Heart right ventricle (tissue), 16 donors: ENCODE measurements at regions of chr1 and their contacts with region 1.

Region 1: DNA sequence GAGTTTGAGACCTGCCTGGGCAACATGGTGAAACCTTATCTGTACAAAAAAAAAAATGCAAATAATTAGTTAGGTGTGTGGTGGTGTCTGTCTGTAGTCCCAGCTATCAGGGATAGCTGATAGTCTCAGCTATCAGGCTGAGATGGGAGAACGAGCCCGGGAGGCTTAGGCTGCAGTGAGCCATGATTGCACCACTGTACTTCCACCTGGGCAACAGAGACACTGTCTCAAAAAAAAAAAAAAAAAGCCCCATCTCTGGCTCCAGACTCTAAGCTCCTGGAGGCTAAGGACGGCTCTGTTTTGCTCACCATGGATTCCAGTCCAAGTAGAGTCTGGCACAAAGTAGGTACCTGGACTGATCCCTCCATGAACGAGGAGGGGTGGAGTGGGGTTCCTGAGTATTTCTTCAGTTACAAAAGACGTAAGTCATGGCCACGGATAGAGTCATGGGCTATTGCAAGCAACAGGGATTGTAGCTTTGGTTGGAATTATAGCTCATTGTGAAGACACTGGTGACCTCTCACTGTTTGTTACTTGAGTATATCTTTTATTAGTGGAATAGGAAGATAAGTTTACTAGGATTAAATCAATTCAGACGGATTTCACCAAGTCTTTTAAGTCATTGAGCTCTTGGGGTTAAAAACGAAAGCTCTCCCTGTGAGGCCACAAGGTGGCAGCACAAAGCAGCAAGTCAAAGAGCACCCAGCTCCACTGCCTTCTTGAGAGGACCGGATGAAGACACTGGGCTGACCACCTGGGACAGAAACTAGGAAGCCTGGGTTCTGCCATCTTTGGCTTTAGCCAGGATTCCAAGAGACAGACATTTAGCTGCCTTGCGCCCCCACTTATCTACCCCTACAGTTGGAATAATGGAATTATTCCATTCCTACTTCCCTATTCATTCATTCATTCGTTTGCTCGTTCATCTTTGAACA is 35.6 kb upstream of the TMEM61 start:
- DNase-seq: peak; percentile 52 to 69
- ATAC-seq: peak in 7 of 8 donors; percentile 71 to 85 (median 77)
- H3K4me3 ChIP-seq: peak overlapping the region in 1 of 10 donors; percentile 24
- H3K27ac ChIP-seq: no peak overlapping the region
- H3K4me1 ChIP-seq: peaks cover 0 to 10% (median 0%) of the 10 kb centered on the region in 9 donors
- H3K27me3 ChIP-seq: no peaks in the 10 kb centered on the region
- CTCF ChIP-seq: peak; percentile 61 to 90 (median 85)

Region 2: DNA sequence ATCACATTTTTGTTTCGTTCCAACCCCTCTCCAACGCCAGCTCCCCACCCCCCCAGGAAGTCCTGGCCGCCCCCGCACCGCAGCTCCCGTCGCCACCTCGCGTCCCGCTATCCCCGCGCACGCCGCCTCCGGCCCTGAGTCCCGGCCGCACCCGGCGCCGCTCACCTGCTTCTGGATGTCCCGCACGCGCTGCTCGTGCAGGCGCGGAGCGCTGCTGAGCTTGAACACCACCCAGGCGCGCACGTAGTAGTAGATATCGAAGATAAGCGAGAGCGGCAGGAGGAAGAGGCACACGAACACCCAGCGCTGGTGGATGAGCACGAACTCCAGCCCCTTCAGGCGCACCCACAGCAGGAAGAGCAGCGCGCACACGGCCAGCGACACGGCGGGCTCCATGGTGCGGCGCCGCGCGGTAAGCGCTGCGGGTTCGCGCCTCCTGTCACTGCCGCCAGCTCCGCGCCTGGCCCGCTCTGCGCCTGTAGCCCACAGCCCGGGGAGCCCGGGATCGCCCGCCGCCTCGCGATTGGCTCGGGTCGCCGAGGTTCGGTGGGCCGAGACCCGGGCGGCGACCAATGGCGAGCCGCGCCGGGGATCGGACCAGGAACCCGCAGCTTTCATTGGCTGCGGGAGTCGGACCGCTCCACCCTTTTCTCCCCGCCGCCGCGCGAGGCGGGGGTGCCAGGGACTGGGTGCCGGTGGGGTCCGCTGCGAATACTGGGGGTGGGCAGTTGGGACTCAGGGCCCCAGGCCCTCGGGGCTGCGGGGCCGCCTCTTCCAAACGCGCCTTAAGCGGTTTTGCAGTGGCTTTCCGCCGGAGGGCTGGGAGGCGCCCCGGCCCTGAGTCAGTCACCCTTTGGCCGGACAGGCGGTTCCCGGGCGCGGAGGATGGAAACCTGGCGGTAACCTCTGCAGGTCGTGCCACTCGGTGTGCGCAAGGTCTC is 57.9 kb before region 1 on chr1 and contains the start of gene DHCR24:
- intact Hi-C with region 1: loop called in 1 of 10 experiments (anchors 2 kb)
- DNase-seq: peak; percentile 82 to 87
- ATAC-seq: peak; percentile 96 to 99 (median 98)
- H3K4me3 ChIP-seq: peak within 1 kb of the TSS; percentile 59 to 89 (median 74)
- H3K27ac ChIP-seq: peak within 1 kb of the TSS in 6 of 10 donors; percentile 54 to 73 (median 65)
- H3K4me1 ChIP-seq: peaks cover 0 to 19% (median 14%) of the 10 kb centered on the region in 9 donors
- H3K27me3 ChIP-seq: peaks cover 0 to 11% (median 0%) of the 10 kb centered on the region in 7 donors
- CTCF ChIP-seq: no peak
- total RNA-seq, gene DHCR24: 12.6 to 36.0 (median 15.0) TPM